Uterus (tissue), 4 donors: ENCODE measurements at regions of chr1 and their contacts with region 1.

Region 1: GRCh38 chr1:64268653-64269557 is 65.5 kb downstream of the UBE2U start:
- DNase-seq: peak; percentile 51 to 77
- H3K4me3 ChIP-seq: no peak overlapping the region
- H3K27ac ChIP-seq: no peak overlapping the region
- H3K4me1 ChIP-seq: no peaks in the 10 kb centered on the region
- H3K27me3 ChIP-seq: no peaks in the 10 kb centered on the region
- CTCF ChIP-seq: peak; percentile 78 to 86 (median 80)
- POLR2A ChIP-seq: no peak

Region 2: GRCh38 chr1:64553281-64553680 is 284.4 kb after region 1 on chr1:
- intact Hi-C with region 1: no loop called
- DNase-seq: no peak
- H3K4me3 ChIP-seq: no peak overlapping the region
- H3K27ac ChIP-seq: no peak overlapping the region
- H3K4me1 ChIP-seq: no peaks in the 10 kb centered on the region
- H3K27me3 ChIP-seq: no peaks in the 10 kb centered on the region
- CTCF ChIP-seq: no peak
- POLR2A ChIP-seq: no peak

Region 3: GRCh38 chr1:64675718-64676345 is 406.9 kb after region 1 on chr1:
- intact Hi-C with region 1: loop called (anchors 10 kb)
- DNase-seq: no peak
- H3K4me3 ChIP-seq: no peak overlapping the region
- H3K27ac ChIP-seq: no peak overlapping the region
- H3K4me1 ChIP-seq: no peaks in the 10 kb centered on the region
- H3K27me3 ChIP-seq: no peaks in the 10 kb centered on the region
- CTCF ChIP-seq: peak; percentile 43 to 70 (median 53)
- POLR2A ChIP-seq: no peak

Region 4: DNA sequence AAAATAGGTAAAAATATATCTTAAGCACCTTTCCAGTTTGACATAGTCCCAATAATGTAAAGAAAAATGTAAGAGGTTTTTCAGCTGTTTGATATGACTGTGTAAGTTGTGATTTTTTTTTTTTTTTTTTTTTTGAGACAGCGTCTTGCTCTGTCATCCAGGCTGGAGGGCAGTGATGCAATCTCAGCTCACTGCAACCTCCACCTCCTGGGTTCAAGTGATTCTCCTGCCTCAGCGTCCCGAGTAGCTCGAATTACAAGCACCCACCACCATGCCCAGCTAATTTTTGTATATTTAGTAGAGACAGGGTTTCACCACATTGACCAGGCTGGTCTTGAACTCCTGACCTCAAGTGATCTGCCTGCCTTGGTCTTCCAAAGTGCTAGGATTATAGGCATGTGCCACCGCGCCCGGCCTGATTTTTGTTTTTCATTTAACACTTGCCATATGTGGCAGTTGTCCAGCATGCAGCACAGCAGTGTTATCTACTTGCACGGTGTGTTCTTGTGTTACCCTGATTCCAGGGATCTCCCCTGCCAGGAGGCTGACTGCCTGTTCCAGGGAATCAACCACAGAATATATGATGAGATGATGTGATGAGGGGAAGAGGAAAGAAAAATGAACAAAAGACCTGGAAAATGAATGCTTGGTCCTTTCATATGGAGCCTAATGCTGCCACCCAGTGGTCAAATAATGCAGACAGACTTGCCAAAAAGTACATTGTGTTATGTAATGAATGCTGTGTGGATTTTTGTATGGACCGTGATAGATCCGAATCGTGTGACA is 555.0 kb after region 1 on chr1:
- intact Hi-C with region 1: loop called (anchors 5 kb)
- DNase-seq: peak; percentile 53 to 77
- H3K4me3 ChIP-seq: no peak overlapping the region
- H3K27ac ChIP-seq: no peak overlapping the region
- H3K4me1 ChIP-seq: no peaks in the 10 kb centered on the region
- H3K27me3 ChIP-seq: no peaks in the 10 kb centered on the region
- CTCF ChIP-seq: peak; percentile 74 to 89 (median 80)
- POLR2A ChIP-seq: no peak